BJ (cell line): ENCODE measurements at regions of chr18 and their contacts with region 1.

Region 1: GRCh38 chr18:3703732-3704176 is 253.8 kb downstream of the TGIF1 start:
- DNase-seq: no peak
- H3K4me3 ChIP-seq: 0 out of 2 replicates have a peak overlapping the region, but pooled peaks have one; percentile 6
- H3K27me3 ChIP-seq: peaks cover 1% of the 10 kb centered on the region
- CTCF ChIP-seq: peak; percentile 83

Region 2: GRCh38 chr18:3499501-3499900 is 204.3 kb before region 1 on chr18:
- CTCF ChIA-PET with region 1: no interaction called
- POLR2A ChIA-PET with region 1: no interaction called
- DNase-seq: no peak
- H3K4me3 ChIP-seq: peak overlapping the region; percentile 44
- H3K27me3 ChIP-seq: no peaks in the 10 kb centered on the region
- CTCF ChIP-seq: no peak

Region 3: DNA sequence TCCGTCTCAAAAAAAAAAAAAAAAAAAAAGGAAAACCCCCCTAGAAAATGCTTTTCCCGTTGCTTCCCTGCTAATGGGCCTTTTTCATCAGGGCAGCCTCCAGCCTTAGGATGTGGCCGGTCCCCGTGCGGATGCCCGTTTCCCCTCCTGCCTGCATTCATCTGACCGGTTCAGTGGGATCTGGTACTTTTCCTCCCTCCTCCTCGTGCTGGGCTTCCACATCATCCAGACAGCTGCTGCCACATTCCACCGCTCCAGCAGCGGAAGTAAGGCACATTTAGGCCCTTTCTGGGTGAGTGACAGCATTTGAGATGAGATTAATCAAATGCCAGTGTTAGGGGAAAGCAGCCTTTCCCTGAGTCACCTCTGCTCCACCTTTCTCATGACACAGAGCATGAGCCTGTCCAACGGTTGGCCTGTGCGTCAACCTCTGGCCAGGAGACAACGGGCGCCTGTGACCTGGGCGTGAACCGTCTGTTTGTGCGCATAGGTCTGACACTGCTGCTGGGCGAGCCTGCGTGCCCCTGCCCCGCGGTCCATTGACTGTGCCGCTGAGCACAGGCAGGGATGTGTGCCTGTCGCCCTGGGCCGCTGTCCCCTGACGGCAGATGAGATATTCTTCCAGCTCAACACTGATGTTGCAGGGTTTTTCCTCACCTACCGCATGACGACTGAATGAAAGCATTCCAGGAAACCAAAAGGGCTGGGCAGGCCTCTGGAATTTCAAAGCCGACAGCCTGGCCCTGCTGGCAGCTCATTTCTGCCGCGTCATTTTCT is 79.8 kb before region 1 on chr18:
- CTCF ChIA-PET with region 1: no interaction called
- POLR2A ChIA-PET with region 1: no interaction called
- DNase-seq: peak; percentile 91
- H3K4me3 ChIP-seq: peak overlapping the region; percentile 20; the same call in 1 of the 2 replicates
- H3K27me3 ChIP-seq: no peaks in the 10 kb centered on the region
- CTCF ChIP-seq: no peak

Region 4: DNA sequence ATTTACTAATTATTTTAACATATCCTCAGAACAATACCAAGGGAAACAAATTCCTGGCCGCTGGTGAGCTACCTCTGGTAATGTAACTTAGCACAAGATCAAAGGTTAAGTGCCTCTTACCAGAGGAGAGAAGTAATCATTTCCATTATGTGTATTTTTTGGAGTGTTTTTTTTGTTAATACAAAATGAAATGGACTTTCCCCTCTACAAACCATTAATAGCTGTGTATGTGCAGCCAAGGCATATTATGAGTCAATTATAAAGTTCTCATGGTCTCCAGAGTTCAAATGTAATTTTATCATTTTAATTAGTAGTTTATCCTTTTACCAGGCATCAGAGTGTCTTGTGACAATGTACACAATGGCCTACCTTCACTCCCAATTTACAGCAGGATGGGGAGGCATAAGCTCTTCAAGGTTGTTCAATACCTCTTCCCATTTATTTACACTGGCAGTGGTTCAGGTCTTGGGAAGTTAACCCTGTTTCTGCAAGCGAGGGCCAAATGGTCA is 11.6 kb before region 1 on chr18:
- CTCF ChIA-PET with region 1: interaction called, 14 read pairs
- POLR2A ChIA-PET with region 1: no interaction called
- DNase-seq: no peak
- H3K4me3 ChIP-seq: no peak overlapping the region
- H3K27me3 ChIP-seq: no peaks in the 10 kb centered on the region
- CTCF ChIP-seq: no peak

Region 5: GRCh38 chr18:3722320-3723000 is 18.7 kb after region 1 on chr18:
- CTCF ChIA-PET with region 1: interaction called, 11 read pairs
- POLR2A ChIA-PET with region 1: no interaction called
- DNase-seq: no peak
- H3K4me3 ChIP-seq: no peak overlapping the region
- H3K27me3 ChIP-seq: peaks cover 2% of the 10 kb centered on the region; the same call in 1 of the 2 replicates
- CTCF ChIP-seq: no peak

Region 6: DNA sequence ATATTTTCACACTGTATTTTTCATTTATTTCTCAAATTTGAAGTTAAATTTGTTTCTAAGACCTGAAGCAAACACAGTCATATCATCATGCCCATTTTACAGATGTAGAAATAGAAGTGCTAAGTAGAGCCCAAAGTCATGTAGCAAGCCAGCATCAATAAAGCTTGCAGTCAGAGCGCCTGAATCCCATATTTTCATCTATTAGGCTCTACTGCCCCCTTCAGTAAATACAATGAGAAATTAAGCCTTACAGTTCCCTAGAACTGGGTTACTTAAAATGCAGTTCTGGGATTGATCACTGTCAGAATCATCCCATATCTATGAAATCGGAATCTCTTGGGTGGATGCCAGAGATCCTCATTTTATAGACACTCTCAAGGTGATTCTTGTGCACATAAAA is 166.1 kb after region 1 on chr18:
- CTCF ChIA-PET with region 1: interaction called, 81 read pairs
- POLR2A ChIA-PET with region 1: no interaction called
- DNase-seq: peak; percentile 12
- H3K4me3 ChIP-seq: no peak overlapping the region
- H3K27me3 ChIP-seq: no peaks in the 10 kb centered on the region
- CTCF ChIP-seq: peak; percentile 47

Region 7: DNA sequence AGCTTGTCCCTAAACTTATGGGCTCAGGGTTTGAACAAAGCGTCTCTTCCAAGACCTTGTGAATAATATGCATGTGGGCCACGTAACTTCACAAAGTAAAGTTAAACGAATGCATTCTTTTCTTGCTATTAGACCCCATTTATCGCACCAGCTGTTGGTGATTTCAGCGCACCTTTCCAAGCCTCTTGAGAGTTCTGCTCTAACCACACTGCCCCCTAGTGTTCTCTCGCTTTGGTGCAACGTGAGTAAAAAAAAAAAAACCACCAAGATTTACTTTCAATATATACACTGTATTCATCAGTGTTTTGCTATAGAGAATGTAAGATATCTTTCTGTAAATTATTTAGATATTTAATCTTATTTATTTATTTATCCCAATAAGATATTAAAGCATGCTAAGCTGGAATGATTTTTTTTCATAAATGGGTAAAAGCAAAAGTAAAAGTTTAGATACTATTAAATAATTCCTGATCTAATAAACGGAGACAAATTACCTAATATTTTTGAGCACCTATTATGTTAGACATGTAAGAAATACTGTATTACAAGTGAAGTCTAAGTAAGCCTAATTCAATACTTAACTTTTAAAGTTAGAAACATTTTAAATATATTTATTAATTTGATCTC is 291.8 kb after region 1 on chr18:
- CTCF ChIA-PET with region 1: interaction called, 16 read pairs
- POLR2A ChIA-PET with region 1: no interaction called
- DNase-seq: no peak
- H3K4me3 ChIP-seq: no peak overlapping the region
- H3K27me3 ChIP-seq: no peaks in the 10 kb centered on the region
- CTCF ChIP-seq: peak; percentile 89

Region 8: DNA sequence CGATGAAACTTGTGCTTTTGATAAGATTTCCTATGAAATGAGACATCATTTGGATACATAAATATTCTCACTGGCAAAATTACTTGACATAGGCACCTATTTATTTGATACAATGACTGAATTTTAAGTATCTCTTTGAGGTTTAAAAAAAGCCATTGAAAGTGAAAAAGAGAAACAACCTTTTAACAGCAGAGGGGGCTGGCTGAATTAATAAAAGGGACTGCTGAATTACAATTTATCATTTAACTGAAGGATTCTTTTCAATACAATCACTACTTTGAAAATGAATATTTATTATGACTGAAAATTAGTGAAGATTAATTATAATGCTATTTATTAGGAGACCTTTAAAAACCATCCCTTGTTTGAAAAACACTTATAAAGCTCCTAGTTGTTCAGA is 416.1 kb after region 1 on chr18:
- CTCF ChIA-PET with region 1: no interaction called
- POLR2A ChIA-PET with region 1: no interaction called
- DNase-seq: no peak
- H3K4me3 ChIP-seq: no peak overlapping the region
- H3K27me3 ChIP-seq: no peaks in the 10 kb centered on the region
- CTCF ChIP-seq: no peak